GM10248 (cell line): ENCODE measurements at regions of chr5 and their contacts with region 1.

Region 1: DNA sequence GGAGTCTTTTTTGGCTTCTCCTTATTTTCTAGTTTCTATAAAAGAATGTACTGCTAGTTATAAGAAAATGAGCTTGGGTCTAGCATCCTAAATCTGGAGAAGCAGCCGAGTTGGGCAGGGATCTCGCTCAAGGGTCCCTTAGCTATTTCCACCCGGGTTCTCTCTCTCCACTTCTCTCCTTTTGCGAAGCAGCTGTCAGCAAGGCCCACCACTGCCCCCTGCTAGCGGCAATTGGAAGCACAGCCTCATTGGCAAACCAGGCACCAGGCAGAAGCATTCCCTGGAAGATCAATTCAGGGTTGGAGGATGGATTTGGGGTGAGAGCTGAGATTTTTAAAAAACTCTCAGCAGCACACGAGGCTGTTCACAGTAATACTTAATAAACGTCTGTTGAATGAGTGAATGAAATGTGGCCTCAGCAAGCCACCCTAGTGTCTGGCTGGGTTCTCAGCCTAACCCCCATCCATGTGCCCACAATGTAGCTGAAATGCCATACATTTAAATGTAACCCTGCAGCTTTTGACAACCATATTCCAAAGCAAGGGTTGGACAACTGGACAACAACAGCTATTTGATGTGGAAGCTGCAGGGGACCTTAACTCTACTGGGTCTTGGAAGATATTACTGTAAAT is 34.6 kb upstream of the TNIP1 start:
- DNase-seq: peak; percentile 69
- CTCF ChIP-seq: peak; percentile 93

Region 2: GRCh38 chr5:151037561-151038411 is 77.6 kb before region 1 on chr5:
- CTCF ChIA-PET with region 1: interaction called, 11 read pairs
- POLR2A ChIA-PET with region 1: no interaction called
- DNase-seq: no peak
- CTCF ChIP-seq: no peak

Region 3: GRCh38 chr5:151068433-151069197 is 46.8 kb before region 1 on chr5:
- CTCF ChIA-PET with region 1: interaction called, 45 read pairs
- POLR2A ChIA-PET with region 1: interaction called, 3 read pairs
- DNase-seq: peak; percentile 45
- CTCF ChIP-seq: no peak

Region 4: GRCh38 chr5:151086905-151087360 is 28.5 kb before region 1 on chr5:
- CTCF ChIA-PET with region 1: interaction called, 26 read pairs
- POLR2A ChIA-PET with region 1: no interaction called
- DNase-seq: peak; percentile 82
- CTCF ChIP-seq: no peak

Region 5: GRCh38 chr5:151126199-151126645 is 10.8 kb after region 1 on chr5:
- CTCF ChIA-PET with region 1: interaction called, 145 read pairs
- POLR2A ChIA-PET with region 1: interaction called, 4 read pairs
- DNase-seq: peak; percentile 73
- CTCF ChIP-seq: peak; percentile 94

Region 6: GRCh38 chr5:151150471-151151262 is 35.3 kb after region 1 on chr5:
- CTCF ChIA-PET with region 1: interaction called, 67 read pairs
- POLR2A ChIA-PET with region 1: interaction called, 3 read pairs
- DNase-seq: peak; percentile 54
- CTCF ChIP-seq: no peak

Region 7: DNA sequence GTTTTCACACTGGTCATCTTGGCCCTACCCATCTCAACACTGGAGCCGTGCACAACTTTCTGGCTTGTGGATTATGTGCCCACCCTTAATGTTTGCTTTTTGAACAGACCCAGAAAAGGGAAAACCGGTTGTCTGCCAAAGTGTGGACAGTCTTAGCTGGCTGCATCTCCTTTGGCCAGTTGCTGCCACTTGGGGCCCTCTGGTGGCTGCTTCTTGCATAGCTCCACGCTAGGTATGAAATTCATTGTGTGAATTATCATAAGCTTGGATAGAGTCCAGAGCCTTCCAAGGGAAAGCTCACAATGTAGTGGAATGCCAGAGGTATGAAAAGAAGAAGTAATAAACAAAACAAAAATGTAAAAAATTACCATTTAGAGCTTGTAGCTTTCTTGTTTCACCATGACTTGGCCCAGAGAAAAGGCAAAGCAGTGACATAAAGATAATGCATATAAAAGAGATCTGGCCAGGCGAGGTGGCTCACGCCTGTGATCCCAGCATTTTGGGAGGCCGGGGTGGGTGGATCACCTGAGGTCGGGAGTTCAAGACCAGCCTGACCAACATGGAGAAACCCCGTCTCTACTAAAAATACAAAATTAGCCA is 200.7 kb after region 1 on chr5:
- CTCF ChIA-PET with region 1: interaction called, 10 read pairs
- POLR2A ChIA-PET with region 1: no interaction called
- DNase-seq: peak; percentile 80
- CTCF ChIP-seq: peak; percentile 95